A549 (cell line): ENCODE measurements at regions of chr1 and their contacts with region 1.

Region 1: DNA sequence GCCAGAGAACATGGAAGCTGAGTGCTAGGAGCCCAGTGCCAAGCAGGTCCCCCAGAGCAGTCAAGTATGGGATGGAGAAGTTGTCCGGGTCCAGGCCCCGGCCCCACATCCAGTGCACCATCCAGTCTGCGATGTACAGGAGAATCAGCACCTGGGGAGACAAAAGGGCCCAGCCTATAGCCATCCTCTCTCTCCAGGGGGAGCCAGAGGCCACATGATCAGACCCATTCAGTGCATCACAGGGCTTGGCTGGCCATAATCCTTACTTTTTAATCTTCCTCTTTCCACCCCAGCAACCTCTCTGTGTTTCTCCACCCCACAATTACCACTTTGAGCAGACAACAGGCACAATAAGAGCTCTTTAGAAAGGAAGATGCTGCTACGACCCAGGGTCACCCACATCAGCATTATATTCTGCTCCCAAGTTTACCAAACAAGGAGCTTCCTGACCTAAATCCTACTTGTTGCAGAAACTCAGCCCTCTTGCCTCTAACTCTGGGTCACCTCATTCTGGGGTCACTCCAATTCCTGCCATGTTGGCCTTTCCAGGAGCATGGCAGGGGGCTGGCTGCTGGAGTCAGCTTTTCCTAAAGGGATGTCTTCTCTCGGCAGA is 16.4 kb upstream of the RAB29 start:
- DNase-seq: peak; percentile 49 to 83
- ATAC-seq: peak; percentile 96 to 99
- H3K4me3 ChIP-seq: no peak overlapping the region
- H3K27ac ChIP-seq: no peak overlapping the region
- H3K4me1 ChIP-seq: no peaks in the 10 kb centered on the region
- CTCF ChIP-seq: peak; percentile 90
- EP300 ChIP-seq: no peak
- POLR2A ChIP-seq: no peak
- RAD21 ChIP-seq: peak; percentile 95 to 98

Region 2: DNA sequence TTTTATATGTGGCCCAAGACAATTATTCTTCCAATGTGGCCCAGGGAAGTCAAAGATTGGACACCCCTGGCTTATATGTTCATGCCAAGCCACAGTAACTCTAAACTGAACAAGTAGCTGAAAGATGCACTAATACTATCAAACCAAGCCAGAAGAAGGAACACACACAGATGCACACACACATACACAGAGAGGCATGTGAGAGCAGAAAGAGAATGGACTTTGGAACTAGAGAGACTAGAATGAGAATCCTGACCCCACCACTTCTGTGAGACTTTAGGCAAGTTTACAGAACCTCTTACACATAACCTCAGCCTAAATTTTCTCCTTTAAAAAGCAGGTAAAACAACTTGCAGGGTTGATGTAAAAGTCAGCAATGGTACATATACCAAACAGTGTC is 696.3 kb before region 1 on chr1:
- CTCF ChIA-PET with region 1: no interaction called
- POLR2A ChIA-PET with region 1: no interaction called
- DNase-seq: no peak
- ATAC-seq: no peak
- H3K4me3 ChIP-seq: no peak overlapping the region
- H3K27ac ChIP-seq: no peak overlapping the region
- H3K4me1 ChIP-seq: no peaks in the 10 kb centered on the region
- CTCF ChIP-seq: no peak
- EP300 ChIP-seq: no peak
- POLR2A ChIP-seq: no peak
- RAD21 ChIP-seq: no peak

Region 3: DNA sequence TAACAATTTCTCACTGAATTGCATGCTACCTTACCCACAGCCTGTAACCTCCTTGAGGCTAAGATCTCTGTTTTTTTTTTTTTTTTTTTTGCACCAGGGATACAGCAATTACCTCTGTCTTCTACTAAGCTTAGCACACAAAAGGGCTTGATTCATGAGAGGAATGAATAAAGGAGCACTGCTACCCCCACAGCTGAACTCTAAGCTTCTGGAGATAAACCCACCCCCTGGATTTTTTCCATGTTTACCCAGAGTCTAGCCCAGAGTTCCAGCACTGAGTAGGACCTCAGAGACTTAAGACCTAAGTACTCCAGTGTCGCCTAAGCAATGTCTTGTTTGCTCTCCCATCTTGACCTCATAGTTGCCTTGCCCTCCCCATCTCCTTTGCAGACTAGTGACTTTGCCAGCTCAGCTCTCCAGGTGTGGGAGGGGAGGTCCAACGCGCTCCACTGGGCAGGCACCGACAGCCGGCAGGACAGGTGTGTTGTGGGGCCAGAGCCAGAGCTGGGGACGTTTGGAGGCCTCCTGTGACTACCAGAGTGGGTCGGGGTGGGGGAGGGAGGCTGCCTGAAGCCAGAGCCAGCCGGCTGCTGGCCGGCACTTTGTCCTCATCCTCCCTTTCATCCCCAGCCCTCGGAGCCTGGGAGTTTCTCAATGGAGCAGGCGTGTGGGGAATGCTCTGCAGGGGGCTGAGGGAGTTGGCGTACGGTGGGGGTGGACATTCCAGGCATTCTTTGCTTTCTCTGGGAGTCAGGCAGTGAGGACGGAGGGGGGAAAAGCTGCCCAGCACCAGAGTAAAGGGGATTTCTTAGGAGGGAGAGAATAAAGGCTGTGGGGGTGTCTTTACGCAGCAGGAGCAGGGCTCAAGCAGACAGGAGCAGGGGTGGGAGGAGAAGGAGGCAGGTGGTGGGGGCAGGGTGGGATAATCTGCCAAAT is 490.5 kb before region 1 on chr1:
- CTCF ChIA-PET with region 1: no interaction called
- POLR2A ChIA-PET with region 1: no interaction called
- DNase-seq: peak in 1 of 2 experiments; percentile 96
- ATAC-seq: peak; percentile 53 to 54
- H3K4me3 ChIP-seq: peak overlapping the region; percentile 8; the same call in 1 of the 3 replicates
- H3K27ac ChIP-seq: peak overlapping the region; percentile 98 to 99
- H3K4me1 ChIP-seq: peaks cover 94% of the 10 kb centered on the region
- CTCF ChIP-seq: no peak
- EP300 ChIP-seq: peak; percentile 95 to 99; a peak in 4 of 5 replicates
- POLR2A ChIP-seq: no peak
- RAD21 ChIP-seq: peak; percentile 32 to 62

Region 4: GRCh38 chr1:205693421-205693991 is 98.2 kb before region 1 on chr1:
- CTCF ChIA-PET with region 1: no interaction called
- POLR2A ChIA-PET with region 1: no interaction called
- DNase-seq: no peak
- ATAC-seq: no peak
- H3K4me3 ChIP-seq: no peak overlapping the region
- H3K27ac ChIP-seq: no peak overlapping the region
- H3K4me1 ChIP-seq: 0 out of 3 replicates have a peak, but pooled peaks cover 3% of the 10 kb centered on the region
- CTCF ChIP-seq: no peak
- EP300 ChIP-seq: no peak
- POLR2A ChIP-seq: no peak
- RAD21 ChIP-seq: no peak

Region 5: DNA sequence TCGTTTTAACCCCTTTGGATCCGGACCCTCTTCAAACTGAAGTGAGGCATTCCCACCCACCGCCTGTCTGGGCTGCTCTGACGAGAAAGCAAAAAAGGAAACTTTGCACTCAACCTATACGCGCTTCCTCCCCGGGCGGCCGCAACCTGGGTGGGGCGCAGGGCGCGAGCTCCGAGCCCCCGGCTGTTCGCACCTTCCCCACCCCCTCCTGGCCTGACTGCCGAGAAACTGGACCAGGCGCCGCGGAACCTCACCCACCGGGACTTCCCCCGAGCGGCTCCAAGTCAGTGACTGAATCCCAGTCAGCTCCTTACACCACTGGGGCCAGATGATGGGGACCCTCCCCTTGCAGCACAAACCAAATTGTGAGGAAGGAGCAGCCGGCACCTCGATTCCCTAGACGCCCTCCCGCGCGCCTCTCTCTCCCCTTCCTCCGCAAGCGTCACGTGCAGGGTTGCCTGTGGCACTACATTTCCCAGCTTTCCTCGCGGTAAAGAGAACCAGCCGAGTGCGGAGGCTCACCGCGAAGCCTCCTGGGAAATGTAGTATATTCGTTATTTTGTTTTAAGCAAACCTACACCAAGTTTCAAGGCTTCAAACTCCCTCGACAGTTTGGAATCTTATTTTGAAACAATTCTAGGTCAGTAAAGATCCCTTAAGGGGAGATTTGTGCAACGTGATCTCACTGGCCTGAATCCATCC is 16.5 kb before region 1 on chr1 and contains the start of gene RAB29:
- CTCF ChIA-PET with region 1: interaction called, 27 read pairs
- POLR2A ChIA-PET with region 1: no interaction called
- DNase-seq: peak; percentile 69 to 74
- ATAC-seq: peak; percentile 97 to 99
- H3K4me3 ChIP-seq: peak within 1 kb of the TSS; percentile 64
- H3K27ac ChIP-seq: peak within 1 kb of the TSS; percentile 70 to 88
- H3K4me1 ChIP-seq: peaks cover 9% of the 10 kb centered on the region; the same call in 1 of the 3 replicates
- CTCF ChIP-seq: no peak
- EP300 ChIP-seq: no peak
- POLR2A ChIP-seq: no peak
- RAD21 ChIP-seq: no peak
- polyA plus RNA-seq, gene RAB29: 9.8 and 13.2 TPM in 2 replicates

Region 6: DNA sequence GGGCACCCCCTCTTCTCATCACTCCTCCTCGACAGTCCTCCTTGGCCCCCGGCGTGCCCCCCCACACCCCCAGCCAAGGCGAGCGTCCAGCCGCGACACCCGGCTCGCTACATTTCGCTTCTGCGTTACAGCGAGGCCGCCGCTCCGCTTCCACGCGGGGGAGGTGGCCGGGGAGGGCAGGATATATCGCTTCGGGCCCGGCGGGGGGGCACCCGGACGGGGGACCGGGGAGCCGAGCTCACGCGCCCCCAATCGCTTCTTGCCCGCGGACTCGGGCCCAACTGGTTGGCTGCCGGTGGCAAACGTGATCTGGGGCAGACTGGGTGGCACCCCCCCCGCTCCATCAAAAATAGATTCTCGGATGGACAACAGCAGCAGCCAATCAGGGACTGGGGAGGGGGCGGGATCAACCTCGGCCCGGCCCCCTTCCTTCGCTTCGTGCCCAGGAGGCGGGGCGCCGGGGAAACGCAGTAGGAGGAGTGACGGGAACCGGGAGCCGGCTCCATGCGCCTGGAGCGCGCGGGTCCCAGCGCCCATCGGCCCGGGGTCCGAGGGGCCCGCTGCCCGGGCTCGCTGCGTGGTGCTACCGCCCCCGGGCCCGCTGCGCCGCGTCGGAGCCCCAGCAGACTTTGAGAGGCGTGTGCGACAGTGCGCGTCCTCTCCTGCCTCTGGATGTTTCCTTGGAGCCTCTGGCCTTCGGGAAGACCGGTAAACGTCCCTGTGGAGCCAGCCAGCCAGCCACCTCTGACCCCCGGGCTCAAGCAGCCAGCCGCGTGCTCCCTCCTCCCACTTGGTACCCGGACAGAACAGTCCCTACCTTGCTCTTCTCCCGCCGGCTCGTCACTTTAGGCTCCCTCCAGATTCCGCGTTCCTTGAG is 21.4 kb after region 1 on chr1 and contains the start of gene SLC41A1:
- CTCF ChIA-PET with region 1: interaction called, 120 read pairs
- POLR2A ChIA-PET with region 1: no interaction called
- DNase-seq: peak; percentile 90 to 95
- ATAC-seq: peak; percentile 94 to 95
- H3K4me3 ChIP-seq: peak within 1 kb of the TSS; percentile 76
- H3K27ac ChIP-seq: peak within 1 kb of the TSS; percentile 81 to 98
- H3K4me1 ChIP-seq: peaks cover 19% of the 10 kb centered on the region
- CTCF ChIP-seq: no peak
- EP300 ChIP-seq: no peak
- POLR2A ChIP-seq: peak; percentile 56
- RAD21 ChIP-seq: no peak
- polyA plus RNA-seq, gene SLC41A1: 23.5 and 26.0 TPM in 2 replicates

Region 7: GRCh38 chr1:205896320-205896719 is 104.6 kb after region 1 on chr1:
- CTCF ChIA-PET with region 1: interaction called, 11 read pairs
- POLR2A ChIA-PET with region 1: no interaction called
- DNase-seq: no peak
- ATAC-seq: no peak
- H3K4me3 ChIP-seq: no peak overlapping the region
- H3K27ac ChIP-seq: no peak overlapping the region
- H3K4me1 ChIP-seq: no peaks in the 10 kb centered on the region
- CTCF ChIP-seq: no peak
- EP300 ChIP-seq: no peak
- POLR2A ChIP-seq: no peak
- RAD21 ChIP-seq: no peak

Region 8: DNA sequence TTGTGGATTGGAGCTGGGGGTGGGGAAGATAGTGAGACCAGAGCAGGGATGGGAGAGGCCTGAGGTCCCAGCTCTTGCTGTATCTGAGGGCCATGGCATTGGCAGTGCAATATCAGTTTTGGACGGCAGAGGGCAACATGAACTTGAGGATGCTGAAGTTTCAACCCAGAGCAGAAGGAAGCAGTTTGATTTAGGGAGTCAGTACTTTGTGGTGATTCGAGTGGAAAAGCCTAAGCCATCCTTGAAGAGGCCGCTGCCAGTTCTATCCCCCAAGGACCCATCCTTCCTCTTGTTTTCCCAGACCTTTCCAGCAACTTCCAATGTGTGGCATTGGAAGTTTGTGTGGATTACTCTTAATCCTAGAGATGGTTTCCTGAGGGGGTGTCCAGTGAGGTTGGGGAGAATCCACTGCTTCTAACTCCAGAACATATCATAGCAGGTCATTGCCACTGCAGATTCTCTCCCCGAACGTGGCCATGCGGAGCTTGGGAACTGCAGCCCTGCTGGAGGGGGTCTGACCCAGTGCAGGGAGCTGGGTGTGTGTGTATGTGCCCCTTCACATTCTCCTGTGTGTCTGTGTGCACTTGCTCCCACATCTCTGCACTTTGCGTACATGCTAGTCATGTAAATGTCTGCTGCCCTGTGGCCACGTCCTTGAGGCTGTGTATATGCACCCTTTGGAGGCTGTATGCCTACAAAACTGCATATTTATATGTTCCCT is 127.5 kb after region 1 on chr1:
- CTCF ChIA-PET with region 1: interaction called, 208 read pairs
- POLR2A ChIA-PET with region 1: no interaction called
- DNase-seq: peak; percentile 85 to 86
- ATAC-seq: peak; percentile 94 to 96
- H3K4me3 ChIP-seq: no peak overlapping the region
- H3K27ac ChIP-seq: peak overlapping the region; percentile 48 to 71; a peak in 4 of 6 replicates
- H3K4me1 ChIP-seq: peaks cover 8% of the 10 kb centered on the region
- CTCF ChIP-seq: peak; percentile 93
- EP300 ChIP-seq: no peak
- POLR2A ChIP-seq: no peak
- RAD21 ChIP-seq: peak; percentile 98 to 99

Region 9: GRCh38 chr1:205967555-205968335 is 176.1 kb after region 1 on chr1:
- CTCF ChIA-PET with region 1: interaction called, 14 read pairs
- POLR2A ChIA-PET with region 1: no interaction called
- DNase-seq: no peak
- ATAC-seq: no peak
- H3K4me3 ChIP-seq: no peak overlapping the region
- H3K27ac ChIP-seq: no peak overlapping the region
- H3K4me1 ChIP-seq: peaks cover 7% of the 10 kb centered on the region
- CTCF ChIP-seq: no peak
- EP300 ChIP-seq: no peak
- POLR2A ChIP-seq: no peak
- RAD21 ChIP-seq: no peak

Region 10: GRCh38 chr1:206106328-206107167 is 314.9 kb after region 1 on chr1:
- CTCF ChIA-PET with region 1: interaction called, 28 read pairs
- POLR2A ChIA-PET with region 1: no interaction called
- DNase-seq: peak; percentile 71 to 81
- ATAC-seq: peak; percentile 87 to 98
- H3K4me3 ChIP-seq: no peak overlapping the region
- H3K27ac ChIP-seq: no peak overlapping the region
- H3K4me1 ChIP-seq: no peaks in the 10 kb centered on the region
- CTCF ChIP-seq: peak; percentile 92
- EP300 ChIP-seq: no peak
- POLR2A ChIP-seq: no peak
- RAD21 ChIP-seq: peak; percentile 90 to 94